ENCODE measurements at regions of chr5 and their contacts with region 1.

Region 1: GRCh38 chr5:42514754-42515153 is 91.5 kb downstream of the GHR start:
- DNase-seq: peak; percentile 29
- H3K4me3 Mint-ChIP-seq: no peak overlapping the region
- H3K27ac Mint-ChIP-seq: no peak overlapping the region
- H3K4me1 Mint-ChIP-seq: peaks cover 5% of the 10 kb centered on the region
- H3K27me3 Mint-ChIP-seq: no peaks in the 10 kb centered on the region
- CTCF ChIP-seq: peak; percentile 11

Region 2: GRCh38 chr5:42502613-42503470 is 11.9 kb before region 1 on chr5:
- CTCF ChIA-PET with region 1: interaction called, 21 read pairs
- POLR2A ChIA-PET with region 1: interaction called, 5 read pairs
- intact Hi-C with region 1: no loop called
- DNase-seq: no peak
- H3K4me3 Mint-ChIP-seq: peak overlapping the region; percentile 16
- H3K27ac Mint-ChIP-seq: peak overlapping the region; percentile 86
- H3K4me1 Mint-ChIP-seq: peaks cover 39% of the 10 kb centered on the region
- H3K27me3 Mint-ChIP-seq: no peaks in the 10 kb centered on the region
- CTCF ChIP-seq: no peak

Region 3: GRCh38 chr5:42526179-42526578 is 11.4 kb after region 1 on chr5:
- CTCF ChIA-PET with region 1: interaction called, 11 read pairs
- POLR2A ChIA-PET with region 1: interaction called, 4 read pairs
- intact Hi-C with region 1: no loop called
- DNase-seq: no peak
- H3K4me3 Mint-ChIP-seq: no peak overlapping the region
- H3K27ac Mint-ChIP-seq: no peak overlapping the region
- H3K4me1 Mint-ChIP-seq: no peaks in the 10 kb centered on the region
- H3K27me3 Mint-ChIP-seq: no peaks in the 10 kb centered on the region
- CTCF ChIP-seq: no peak